Natural killer cell (primary cell): ENCODE measurements at regions of chr16 and their contacts with region 1.

Region 1: DNA sequence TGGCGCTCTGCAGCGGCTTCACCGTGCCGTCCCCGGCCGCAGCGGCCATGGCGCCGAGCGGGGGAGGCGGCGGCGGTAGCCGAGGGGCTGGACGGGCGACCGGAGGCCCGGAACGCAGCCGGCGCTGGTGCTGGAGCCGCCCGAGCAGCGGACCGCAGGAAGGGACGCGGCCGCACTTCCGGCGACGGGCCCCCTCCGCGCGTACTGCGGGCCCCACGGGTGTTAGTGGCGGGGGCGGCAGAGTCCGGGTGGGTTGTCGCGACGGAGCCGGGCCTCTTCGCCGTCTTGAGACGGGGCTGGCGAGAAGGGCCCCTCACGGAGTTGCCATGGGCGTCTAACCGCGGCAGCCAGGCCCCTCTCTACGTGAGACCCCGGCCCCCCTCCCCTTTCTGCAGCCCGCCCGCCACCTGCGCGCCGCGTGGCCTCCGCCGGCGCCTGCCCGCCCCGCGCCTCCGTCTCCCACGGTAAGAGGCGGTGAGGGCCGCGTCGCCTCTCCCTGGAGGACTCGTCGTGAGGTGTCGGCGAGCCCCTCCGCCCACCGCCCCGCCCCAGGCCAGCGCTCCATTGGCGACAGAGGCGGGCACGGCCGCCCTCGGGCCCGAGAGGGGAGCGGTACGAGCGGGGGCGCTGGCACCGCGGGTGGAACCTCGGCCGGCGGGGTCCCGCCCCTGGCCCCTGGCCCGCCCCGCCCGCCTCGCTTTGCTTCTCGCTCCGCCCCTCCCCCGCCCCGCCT is at the starts of genes VPS9D1 and ZNF276:
- DNase-seq: peak; percentile 79 to 92
- ATAC-seq: peak; percentile 54 to 73 (median 56)
- H3K4me3 ChIP-seq: peak within 1 kb of the TSS; percentile 98
- H3K4me3 Mint-ChIP-seq: peak within 1 kb of the TSS; percentile 98
- H3K27ac ChIP-seq: peak within 1 kb of the TSS; percentile 92
- H3K27ac Mint-ChIP-seq: peak within 1 kb of the TSS; percentile 94 to 97
- H3K4me1 ChIP-seq: peaks cover 53% of the 10 kb centered on the region
- H3K4me1 Mint-ChIP-seq: peaks cover 20 to 40% of the 10 kb centered on the region in 2 donors
- H3K27me3 ChIP-seq: no peaks in the 10 kb centered on the region
- H3K27me3 Mint-ChIP-seq: no peaks in the 10 kb centered on the region
- CTCF ChIP-seq: no peak
- total RNA-seq, gene VPS9D1: 31.7 to 43.0 (median 35.4) TPM
- total RNA-seq, gene ZNF276: 146 to 206 (median 186) TPM

Region 2: DNA sequence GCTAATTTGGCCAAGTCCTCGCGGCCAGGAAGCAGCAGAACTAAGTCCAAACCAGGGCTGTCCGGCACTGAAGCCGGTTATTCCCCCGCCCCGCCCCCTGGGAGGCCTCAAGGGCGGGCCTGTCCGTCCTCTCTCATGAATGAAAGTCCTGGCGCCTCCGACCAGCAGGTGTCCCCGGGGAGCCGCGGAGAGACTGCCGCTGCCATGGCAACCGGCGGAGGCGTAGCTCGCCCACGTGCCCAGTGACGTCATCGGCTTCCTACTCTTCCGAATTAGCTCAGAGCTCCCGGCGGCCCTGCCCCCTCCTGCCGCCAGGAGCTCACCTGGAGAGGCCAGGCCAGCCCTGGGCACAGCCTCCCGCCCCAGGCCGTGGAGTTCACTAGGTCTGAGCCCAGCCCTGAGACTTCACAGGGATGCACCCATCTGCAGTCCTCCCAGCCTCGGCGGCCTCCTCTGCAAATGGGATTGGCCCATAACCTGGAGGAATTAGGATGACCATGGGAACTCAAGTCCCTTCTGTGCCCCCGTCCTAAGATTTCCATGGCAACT is 20.8 kb before region 1 on chr16:
- intact Hi-C with region 1: loop called (anchors 1 kb)
- DNase-seq: peak; percentile 97 to 99
- ATAC-seq: peak; percentile 43 to 57 (median 49)
- H3K4me3 ChIP-seq: peak overlapping the region; percentile 38
- H3K4me3 Mint-ChIP-seq: peak overlapping the region; percentile 72
- H3K27ac ChIP-seq: peak overlapping the region; percentile 83
- H3K27ac Mint-ChIP-seq: peak overlapping the region; percentile 81 to 86
- H3K4me1 ChIP-seq: peaks cover 44% of the 10 kb centered on the region
- H3K4me1 Mint-ChIP-seq: peaks cover 12 to 32% of the 10 kb centered on the region in 2 donors
- H3K27me3 ChIP-seq: no peaks in the 10 kb centered on the region
- H3K27me3 Mint-ChIP-seq: no peaks in the 10 kb centered on the region
- CTCF ChIP-seq: peak; percentile 79

Region 3: GRCh38 chr16:89737341-89738071 is 16.5 kb after region 1 on chr16:
- intact Hi-C with region 1: loop called (anchors 1 kb)
- DNase-seq: peak; percentile 35 to 82
- ATAC-seq: peak; percentile 57 to 71 (median 63)
- H3K4me3 ChIP-seq: no peak overlapping the region
- H3K4me3 Mint-ChIP-seq: peak overlapping the region; percentile 63
- H3K27ac ChIP-seq: peak overlapping the region; percentile 16
- H3K27ac Mint-ChIP-seq: peak overlapping the region; percentile 76 to 88
- H3K4me1 ChIP-seq: peaks cover 49% of the 10 kb centered on the region
- H3K4me1 Mint-ChIP-seq: peaks cover 33 to 38% of the 10 kb centered on the region in 2 donors
- H3K27me3 ChIP-seq: no peaks in the 10 kb centered on the region
- H3K27me3 Mint-ChIP-seq: no peaks in the 10 kb centered on the region
- CTCF ChIP-seq: no peak

Region 4: GRCh38 chr16:89764711-89765201 is 43.8 kb after region 1 on chr16:
- intact Hi-C with region 1: loop called (anchors 1 kb)
- DNase-seq: peak; percentile 54 to 67
- ATAC-seq: peak; percentile 85 to 88 (median 87)
- H3K4me3 ChIP-seq: peak overlapping the region; percentile 39
- H3K4me3 Mint-ChIP-seq: peak overlapping the region; percentile 93
- H3K27ac ChIP-seq: peak overlapping the region; percentile 83
- H3K27ac Mint-ChIP-seq: peak overlapping the region; percentile 95 to 98
- H3K4me1 ChIP-seq: peaks cover 52% of the 10 kb centered on the region
- H3K4me1 Mint-ChIP-seq: peaks cover 33 to 43% of the 10 kb centered on the region in 2 donors
- H3K27me3 ChIP-seq: no peaks in the 10 kb centered on the region
- H3K27me3 Mint-ChIP-seq: no peaks in the 10 kb centered on the region
- CTCF ChIP-seq: no peak

Region 5: GRCh38 chr16:89841275-89841674 is 120.3 kb after region 1 on chr16:
- intact Hi-C with region 1: loop called (anchors 2 kb)
- DNase-seq: peak; percentile 80 to 90
- ATAC-seq: peak; percentile 74 to 86 (median 83)
- H3K4me3 ChIP-seq: no peak overlapping the region
- H3K4me3 Mint-ChIP-seq: peak overlapping the region; percentile 76
- H3K27ac ChIP-seq: no peak overlapping the region
- H3K27ac Mint-ChIP-seq: peak overlapping the region; percentile 86 to 90
- H3K4me1 ChIP-seq: peaks cover 66% of the 10 kb centered on the region
- H3K4me1 Mint-ChIP-seq: peaks cover 20 to 42% of the 10 kb centered on the region in 2 donors
- H3K27me3 ChIP-seq: no peaks in the 10 kb centered on the region
- H3K27me3 Mint-ChIP-seq: no peaks in the 10 kb centered on the region
- CTCF ChIP-seq: no peak

Region 6: DNA sequence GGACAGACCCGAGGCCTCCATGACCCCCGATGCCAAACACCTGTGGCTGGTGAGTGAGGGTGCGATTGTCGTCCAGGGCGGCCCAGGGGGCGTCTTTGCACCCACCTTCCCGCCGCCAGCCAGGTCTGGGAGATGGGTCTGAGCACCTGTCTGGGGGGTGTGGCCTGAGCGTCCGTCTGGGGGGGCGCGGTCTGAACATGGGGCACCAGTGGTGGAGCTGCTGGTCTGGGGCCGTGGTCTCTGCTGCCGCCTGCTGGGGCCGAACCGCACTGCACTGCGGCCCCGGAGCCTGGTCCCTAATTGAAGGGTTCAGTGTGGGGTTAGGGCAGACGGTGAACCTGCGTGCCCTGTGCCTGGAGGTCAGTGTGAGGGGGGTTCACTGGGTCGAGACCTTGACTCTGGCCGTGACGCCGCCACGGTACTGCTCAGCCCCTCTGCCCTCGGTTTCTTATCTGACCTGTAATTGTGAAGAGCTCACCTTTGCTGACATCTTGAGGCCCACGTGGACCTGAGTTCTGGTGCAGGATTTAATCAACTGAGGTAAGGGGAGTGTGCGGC is 139.8 kb after region 1 on chr16:
- intact Hi-C with region 1: loop called (anchors 5 kb)
- DNase-seq: peak; percentile 83 to 84
- ATAC-seq: peak; percentile 80 to 85 (median 85)
- H3K4me3 ChIP-seq: no peak overlapping the region
- H3K4me3 Mint-ChIP-seq: peak overlapping the region; percentile 58
- H3K27ac ChIP-seq: no peak overlapping the region
- H3K27ac Mint-ChIP-seq: peak overlapping the region; percentile 81 to 84
- H3K4me1 ChIP-seq: peaks cover 50% of the 10 kb centered on the region
- H3K4me1 Mint-ChIP-seq: peaks cover 39 to 44% of the 10 kb centered on the region in 2 donors
- H3K27me3 ChIP-seq: no peaks in the 10 kb centered on the region
- H3K27me3 Mint-ChIP-seq: no peaks in the 10 kb centered on the region
- CTCF ChIP-seq: peak; percentile 97